ENCODE measurements at regions of chrX and their contacts with region 1.

Region 1: GRCh38 chrX:115330498-115331168 is 41.1 kb downstream of the LUZP4 start:
- DNase-seq: peak; percentile 71
- H3K4me3 ChIP-seq: no peak overlapping the region
- H3K27ac ChIP-seq: no peak overlapping the region
- H3K4me1 ChIP-seq: no peaks in the 10 kb centered on the region
- H3K27me3 ChIP-seq: no peaks in the 10 kb centered on the region

Region 2: DNA sequence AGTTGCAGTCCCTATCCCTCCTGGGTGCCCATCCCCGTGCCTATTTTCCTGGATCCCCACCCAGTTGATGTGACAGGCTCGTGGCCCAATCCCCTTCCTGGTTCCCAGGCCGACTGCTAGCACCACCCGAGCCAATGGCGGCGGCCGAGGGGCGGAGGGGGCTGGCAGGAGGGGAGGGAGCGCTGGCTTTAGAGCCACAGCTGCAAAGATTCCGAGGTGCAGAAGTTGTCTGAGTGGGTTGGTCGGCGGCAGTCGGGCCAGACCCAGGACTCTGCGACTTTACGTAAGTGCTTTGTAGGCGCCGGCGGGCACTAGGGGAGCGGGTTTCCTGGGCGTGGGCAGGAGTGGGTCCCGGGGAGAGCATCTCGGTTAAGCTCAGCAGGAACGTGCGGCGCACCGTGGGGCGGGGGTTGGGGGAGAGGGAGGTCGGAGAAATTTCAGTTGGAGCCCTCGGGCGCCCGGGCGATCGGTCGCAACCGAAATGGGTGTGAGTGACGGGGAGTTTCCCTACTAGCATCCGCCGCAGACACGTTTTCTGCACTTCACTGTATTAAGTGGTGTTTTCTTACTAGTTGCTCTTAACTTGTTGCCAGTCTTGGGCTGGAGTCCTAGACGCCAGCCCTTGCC is 230.5 kb after region 1 on chrX and contains the start of gene PLS3:
- in situ Hi-C with region 1: loop called (anchors 10 kb)
- DNase-seq: peak; percentile 83
- H3K4me3 ChIP-seq: peak within 1 kb of the TSS; percentile 85
- H3K27ac ChIP-seq: peak within 1 kb of the TSS; percentile 88
- H3K4me1 ChIP-seq: peaks cover 28% of the 10 kb centered on the region
- H3K27me3 ChIP-seq: no peaks in the 10 kb centered on the region
- total RNA-seq, gene PLS3: 118 and 136 TPM in 2 replicates

Region 3: GRCh38 chrX:115630204-115630603 is 299.6 kb after region 1 on chrX:
- in situ Hi-C with region 1: loop called (anchors 10 kb)
- DNase-seq: peak; percentile 55
- H3K4me3 ChIP-seq: no peak overlapping the region
- H3K27ac ChIP-seq: peak overlapping the region; percentile 30; the same call in 1 of the 2 replicates
- H3K4me1 ChIP-seq: peaks cover 32% of the 10 kb centered on the region
- H3K27me3 ChIP-seq: no peaks in the 10 kb centered on the region

Measured in GM23248 (cell line).